Activated naive CD4-positive, alpha-beta T cell treated with anti-CD3 and anti-CD28 coated beads for 36 hours (primary cell): ENCODE measurements at regions of chr5 and their contacts with region 1.

Region 1: GRCh38 chr5:132019857-132020555 is 8.5 kb upstream of the ACSL6 start:
- DNase-seq: peak; percentile 93
- H3K4me3 Mint-ChIP-seq: peak overlapping the region; percentile 37
- H3K27ac Mint-ChIP-seq: peak overlapping the region; percentile 92
- H3K4me1 Mint-ChIP-seq: peaks cover 28% of the 10 kb centered on the region
- H3K27me3 Mint-ChIP-seq: peaks cover 28% of the 10 kb centered on the region

Region 2: DNA sequence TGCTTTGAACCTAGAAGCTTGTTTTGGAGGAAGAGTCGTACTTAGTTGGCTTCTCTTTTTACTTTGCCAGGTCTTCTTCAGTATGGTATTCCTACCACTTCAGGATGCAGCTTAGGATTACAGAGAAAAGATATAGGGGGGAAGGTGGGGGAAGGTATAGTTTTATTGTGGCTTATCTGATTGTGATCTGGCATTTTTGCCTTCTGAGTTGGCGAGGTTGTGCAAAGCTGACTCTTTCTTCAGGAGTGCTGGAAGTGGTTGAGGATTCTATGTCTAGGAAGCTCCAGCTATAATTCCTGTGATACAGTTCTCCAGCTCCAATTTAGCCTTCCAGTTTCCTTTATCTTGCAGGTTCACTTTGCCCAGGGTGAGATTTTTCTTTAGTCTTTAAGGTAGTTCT is 749.2 kb before region 1 on chr5:
- CTCF ChIA-PET with region 1: no interaction called
- intact Hi-C with region 1: loop called (anchors 1 kb)
- DNase-seq: no peak
- H3K4me3 Mint-ChIP-seq: peak overlapping the region; percentile 50
- H3K27ac Mint-ChIP-seq: peak overlapping the region; percentile 97
- H3K4me1 Mint-ChIP-seq: peaks cover 75% of the 10 kb centered on the region
- H3K27me3 Mint-ChIP-seq: no peaks in the 10 kb centered on the region

Region 3: DNA sequence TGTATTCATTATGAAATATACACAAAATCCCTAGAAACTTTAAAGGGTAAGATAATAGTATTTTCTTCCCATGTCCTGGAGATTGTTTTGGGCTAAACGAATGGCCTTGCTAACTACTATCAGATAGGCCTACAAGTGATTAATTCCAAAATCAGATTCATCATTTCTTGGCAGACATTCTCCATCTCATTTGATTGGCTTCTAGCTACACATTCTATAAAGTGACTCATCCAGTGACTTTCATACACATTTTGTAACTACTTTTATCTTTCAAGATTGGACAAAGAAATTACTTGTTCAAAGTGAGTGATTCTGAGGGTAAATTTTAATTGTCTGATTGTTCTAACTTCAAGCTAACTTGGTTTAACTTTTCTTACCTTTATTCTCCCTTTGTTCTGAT is 478.2 kb before region 1 on chr5:
- CTCF ChIA-PET with region 1: no interaction called
- intact Hi-C with region 1: loop called (anchors 2 kb)
- DNase-seq: no peak
- H3K4me3 Mint-ChIP-seq: peak overlapping the region; percentile 20
- H3K27ac Mint-ChIP-seq: peak overlapping the region; percentile 78
- H3K4me1 Mint-ChIP-seq: peaks cover 81% of the 10 kb centered on the region
- H3K27me3 Mint-ChIP-seq: no peaks in the 10 kb centered on the region

Region 4: DNA sequence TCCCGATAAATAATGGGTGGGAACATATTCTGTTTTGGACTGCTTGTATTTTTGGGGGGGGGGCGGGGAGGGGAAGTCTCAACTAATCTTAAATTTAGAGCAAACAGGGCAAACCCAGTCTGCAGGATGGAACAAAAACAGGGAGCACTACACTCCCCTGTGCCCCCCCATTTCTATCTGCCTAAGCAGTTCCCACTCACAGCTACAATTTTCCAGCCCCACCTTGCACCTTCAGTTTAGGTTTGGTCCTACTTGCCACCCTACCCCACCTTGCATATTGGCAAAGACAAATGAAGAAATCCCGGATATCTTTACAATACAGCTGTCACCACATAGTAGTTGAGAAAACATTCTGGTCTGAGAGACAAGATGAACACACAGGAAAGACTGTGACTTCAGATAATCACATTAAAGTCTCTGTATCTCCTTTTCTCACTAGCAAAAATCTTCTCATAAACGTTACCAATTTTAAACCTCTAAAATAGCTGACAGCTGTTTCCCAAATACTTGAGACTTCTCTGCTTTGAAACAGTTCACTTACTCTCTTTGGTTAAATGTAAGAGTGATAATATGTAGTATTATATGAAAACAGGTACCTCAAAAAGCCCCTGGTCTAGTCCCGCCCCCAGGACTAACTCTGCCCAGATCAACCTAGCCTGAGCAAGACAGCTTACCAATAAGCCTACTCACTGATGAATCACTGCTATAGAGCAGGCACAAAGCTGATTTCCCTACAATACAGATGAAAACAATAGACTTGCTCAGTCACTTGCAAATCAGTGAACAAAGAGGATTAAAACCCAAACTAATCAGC is 379.8 kb before region 1 on chr5:
- CTCF ChIA-PET with region 1: no interaction called
- intact Hi-C with region 1: loop called (anchors 1 kb)
- DNase-seq: peak; percentile 90
- H3K4me3 Mint-ChIP-seq: peak overlapping the region; percentile 59
- H3K27ac Mint-ChIP-seq: peak overlapping the region; percentile 94
- H3K4me1 Mint-ChIP-seq: peaks cover 29% of the 10 kb centered on the region
- H3K27me3 Mint-ChIP-seq: no peaks in the 10 kb centered on the region

Region 5: DNA sequence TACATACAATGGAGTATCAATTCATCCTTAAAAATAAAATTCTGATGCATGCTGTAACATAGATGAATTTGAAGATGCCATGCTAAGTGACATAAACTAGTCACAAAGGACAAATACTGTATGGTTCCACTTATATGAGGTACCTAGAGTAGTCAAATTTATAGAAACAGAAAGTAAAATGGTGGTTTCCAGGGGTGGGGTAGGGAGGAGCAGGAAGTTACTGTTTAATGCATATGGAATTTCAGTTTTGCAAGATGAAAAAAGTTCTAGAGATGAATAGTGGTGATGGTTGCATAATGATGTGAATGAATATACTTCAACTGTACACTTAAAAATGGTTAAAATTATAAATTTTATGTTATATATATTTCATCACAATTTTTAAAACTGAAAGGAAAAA is 165.9 kb before region 1 on chr5:
- CTCF ChIA-PET with region 1: no interaction called
- intact Hi-C with region 1: loop called (anchors 2 kb)
- DNase-seq: peak; percentile 37
- H3K4me3 Mint-ChIP-seq: no peak overlapping the region
- H3K27ac Mint-ChIP-seq: no peak overlapping the region
- H3K4me1 Mint-ChIP-seq: peaks cover 10% of the 10 kb centered on the region
- H3K27me3 Mint-ChIP-seq: no peaks in the 10 kb centered on the region

Region 6: GRCh38 chr5:132064738-132065331 is 44.8 kb after region 1 on chr5:
- CTCF ChIA-PET with region 1: interaction called, 6 read pairs
- intact Hi-C with region 1: loop called (anchors 1 kb)
- DNase-seq: peak; percentile 91
- H3K4me3 Mint-ChIP-seq: no peak overlapping the region
- H3K27ac Mint-ChIP-seq: no peak overlapping the region
- H3K4me1 Mint-ChIP-seq: peaks cover 13% of the 10 kb centered on the region
- H3K27me3 Mint-ChIP-seq: no peaks in the 10 kb centered on the region

Region 7: DNA sequence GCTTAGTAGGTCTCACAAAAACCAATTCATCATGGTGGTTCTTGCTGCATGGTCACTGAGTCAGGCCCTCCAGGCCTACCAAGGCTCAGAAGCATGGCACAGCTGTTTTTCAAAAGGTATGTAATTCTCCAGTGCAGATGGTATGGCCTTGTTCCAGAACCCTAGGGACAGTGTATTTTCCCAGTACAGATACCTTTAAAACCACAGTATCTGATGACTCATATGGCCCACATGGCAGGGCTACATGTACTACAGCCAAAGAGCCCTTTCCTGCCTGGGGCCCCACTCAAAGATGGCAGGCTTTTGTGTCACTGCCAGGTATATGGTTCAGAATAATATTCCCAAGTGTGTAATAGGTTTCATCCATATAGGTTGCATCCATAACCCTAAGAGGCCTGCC is 70.1 kb after region 1 on chr5:
- CTCF ChIA-PET with region 1: no interaction called
- intact Hi-C with region 1: no loop called
- DNase-seq: peak; percentile 20
- H3K4me3 Mint-ChIP-seq: no peak overlapping the region
- H3K27ac Mint-ChIP-seq: no peak overlapping the region
- H3K4me1 Mint-ChIP-seq: peaks cover 11% of the 10 kb centered on the region
- H3K27me3 Mint-ChIP-seq: peaks cover 4% of the 10 kb centered on the region

Region 8: DNA sequence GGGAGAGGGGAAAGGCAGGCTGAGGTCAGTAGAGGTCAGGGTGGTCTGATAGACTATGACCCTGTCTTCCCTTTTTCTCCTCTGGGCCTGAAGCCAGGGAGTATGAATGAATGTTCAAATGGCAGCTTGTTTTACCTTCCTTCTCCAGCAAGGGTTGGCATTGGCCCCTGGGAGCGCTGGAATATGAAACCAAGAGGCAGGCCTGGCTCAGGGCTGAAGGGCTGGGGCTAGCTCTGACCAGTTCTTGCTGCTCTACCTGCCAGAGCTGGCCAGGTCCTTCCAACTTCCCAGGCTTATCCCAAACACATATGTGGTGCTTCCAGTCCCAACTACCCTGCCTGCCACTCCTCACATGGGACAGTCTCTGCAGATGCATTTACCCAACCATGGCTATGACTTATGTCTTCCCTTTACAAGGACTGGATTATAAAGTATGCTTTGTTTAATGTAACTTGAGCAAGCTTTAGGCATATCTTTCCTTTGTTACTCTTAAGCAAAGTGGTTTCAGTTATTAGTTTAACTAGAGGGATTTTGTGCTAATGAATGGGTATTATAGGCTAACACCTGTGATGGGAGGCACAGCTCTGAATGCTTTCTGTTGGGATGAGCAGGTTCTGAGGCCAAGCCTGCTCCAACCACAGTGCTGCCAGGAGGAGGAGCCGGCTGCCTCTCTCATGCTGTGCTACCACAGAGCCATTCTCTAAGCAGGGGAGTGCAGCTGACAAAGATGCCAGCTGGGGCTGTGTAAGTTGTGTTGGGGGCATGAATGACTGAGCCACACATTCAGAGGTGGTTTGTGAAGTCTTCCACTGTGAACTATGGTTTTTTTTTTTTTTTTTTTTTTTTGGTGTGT is 733.4 kb after region 1 on chr5:
- CTCF ChIA-PET with region 1: no interaction called
- intact Hi-C with region 1: loop called (anchors 1 kb)
- DNase-seq: peak; percentile 52
- H3K4me3 Mint-ChIP-seq: no peak overlapping the region
- H3K27ac Mint-ChIP-seq: no peak overlapping the region
- H3K4me1 Mint-ChIP-seq: peaks cover 35% of the 10 kb centered on the region
- H3K27me3 Mint-ChIP-seq: no peaks in the 10 kb centered on the region